PC-3 (cell line): ENCODE measurements at regions of chr5 and their contacts with region 1.

Region 1: DNA sequence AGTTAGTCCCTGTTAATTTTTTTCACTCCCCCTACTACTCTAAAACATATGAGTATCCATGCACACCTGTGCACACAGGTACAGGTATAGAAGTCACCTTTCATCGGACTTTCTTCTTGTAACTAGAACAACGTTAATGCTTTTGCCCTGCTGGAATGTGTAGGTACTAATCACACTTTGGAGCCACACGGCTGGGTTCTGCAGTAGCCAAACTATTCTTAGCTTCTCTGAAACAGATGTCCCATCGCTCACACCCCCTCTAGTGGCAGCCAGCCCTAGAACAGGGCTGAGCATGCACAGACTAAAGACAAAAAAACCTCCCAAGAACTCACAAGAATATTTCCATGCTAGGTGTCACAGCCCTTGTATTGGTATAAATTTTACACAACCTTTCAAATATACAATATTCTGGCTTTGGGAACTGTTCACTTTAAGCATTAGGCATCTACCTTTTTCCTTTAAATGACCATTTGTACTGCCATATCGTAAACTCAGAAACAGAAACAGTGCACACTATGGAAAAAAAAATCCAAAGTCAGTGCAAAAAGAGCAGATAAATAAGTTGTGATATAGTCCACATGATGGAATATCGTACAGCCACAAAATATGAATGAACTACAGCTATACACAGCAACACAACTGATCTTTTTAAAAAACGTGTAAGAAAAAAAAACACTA is 64.0 kb downstream of the RETREG1 start:
- DNase-seq: peak; percentile 95
- ATAC-seq: peak; percentile 99
- H3K4me3 ChIP-seq: no peak overlapping the region
- H3K27ac ChIP-seq: no peak overlapping the region
- H3K4me1 ChIP-seq: 0 out of 2 replicates have a peak, but pooled peaks cover 3% of the 10 kb centered on the region
- H3K27me3 ChIP-seq: no peaks in the 10 kb centered on the region
- CTCF ChIP-seq: peak; percentile 100

Region 2: DNA sequence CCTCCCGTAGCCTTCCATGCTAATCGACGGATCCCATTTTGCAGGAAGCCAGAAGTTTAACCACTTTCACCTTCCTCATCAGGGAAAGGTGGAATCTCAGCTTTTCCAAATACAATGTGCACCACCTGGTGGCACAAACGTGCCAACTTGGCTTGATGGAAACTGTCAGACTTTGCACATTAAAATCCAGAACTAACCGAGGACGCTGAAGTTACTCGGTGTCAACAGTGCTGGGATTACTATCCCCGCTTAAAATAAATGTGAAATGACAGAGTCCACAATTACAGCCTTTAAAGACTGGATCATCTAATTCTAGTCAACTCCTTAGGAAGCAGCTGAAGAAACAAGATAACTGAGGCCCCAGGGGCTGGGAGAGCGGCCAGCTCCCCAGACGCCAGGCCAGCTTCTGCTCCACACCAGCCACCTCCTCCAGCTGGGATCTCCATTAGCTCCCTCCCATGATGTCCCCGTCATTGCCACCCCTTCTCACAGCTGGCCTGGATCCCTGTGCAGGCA is 114.1 kb after region 1 on chr5:
- CTCF ChIA-PET with region 1: no interaction called
- POLR2A ChIA-PET with region 1: no interaction called
- intact Hi-C with region 1: loop called (anchors 1 kb)
- DNase-seq: peak; percentile 50
- ATAC-seq: no peak
- H3K4me3 ChIP-seq: no peak overlapping the region
- H3K27ac ChIP-seq: no peak overlapping the region
- H3K4me1 ChIP-seq: no peaks in the 10 kb centered on the region
- H3K27me3 ChIP-seq: no peaks in the 10 kb centered on the region
- CTCF ChIP-seq: peak; percentile 84